GM13977 (cell line): ENCODE measurements at regions of chr10 and their contacts with region 1.

Region 1: GRCh38 chr10:100518761-100519241 is 860 bp downstream of the SEC31B start:
- DNase-seq: peak; percentile 60
- CTCF ChIP-seq: peak; percentile 63

Region 2: GRCh38 chr10:100338434-100339036 is 180.3 kb before region 1 on chr10:
- in situ Hi-C with region 1: loop called (anchors 10 kb)
- DNase-seq: peak; percentile 78
- CTCF ChIP-seq: peak; percentile 88